B cell (primary cell): ENCODE measurements at regions of chr16 and their contacts with region 1.

Region 1: DNA sequence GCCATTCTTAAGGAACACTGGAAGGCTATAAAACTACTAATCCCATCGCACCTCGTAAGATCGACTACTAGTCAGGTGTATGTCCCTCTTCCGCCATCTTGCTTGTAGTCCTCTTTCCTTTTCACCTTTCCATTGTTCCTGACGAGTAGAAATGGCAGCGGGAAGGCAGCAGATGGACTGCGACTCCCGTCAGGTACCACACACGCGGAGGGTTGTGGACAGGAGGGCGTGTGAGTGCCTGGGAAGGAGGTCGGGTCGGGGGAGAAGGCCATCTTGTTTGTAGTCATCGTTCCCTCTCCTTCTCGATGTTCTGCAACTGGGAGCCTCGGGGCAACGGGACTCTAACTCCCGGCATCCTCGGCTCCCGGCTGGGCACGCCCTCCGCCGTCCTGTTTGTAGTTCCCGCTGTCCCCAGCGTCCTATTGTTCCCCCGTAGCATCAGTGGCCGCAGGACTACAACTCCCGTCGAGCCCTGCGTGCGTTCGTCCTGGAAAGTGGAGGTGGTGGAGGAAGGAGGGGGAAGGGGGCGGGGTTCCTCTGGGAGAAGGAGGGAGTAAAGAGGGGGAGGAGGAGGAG is 324 bp upstream of the FBXL19 start:
- DNase-seq: peak; percentile 98
- ATAC-seq: peak; percentile 69
- H3K4me3 ChIP-seq: peak overlapping the region; percentile 80 to 100 (median 98)
- H3K4me3 Mint-ChIP-seq: peak overlapping the region; percentile 100
- H3K27ac ChIP-seq: peak overlapping the region; percentile 97 to 99
- H3K27ac Mint-ChIP-seq: peak overlapping the region; percentile 100
- H3K4me1 ChIP-seq: peaks cover 0 to 21% of the 10 kb centered on the region in 2 donors
- H3K4me1 Mint-ChIP-seq: peaks cover 19% of the 10 kb centered on the region
- H3K27me3 ChIP-seq: no peaks in the 10 kb centered on the region
- H3K27me3 Mint-ChIP-seq: no peaks in the 10 kb centered on the region
- CTCF ChIP-seq: no peak

Region 2: GRCh38 chr16:30091474-30092372 is 831.3 kb before region 1 on chr16 and contains the start of gene TBX6:
- CTCF ChIA-PET with region 1: no interaction called
- POLR2A ChIA-PET with region 1: no interaction called
- intact Hi-C with region 1: loop called (anchors 2 kb)
- DNase-seq: peak; percentile 95
- ATAC-seq: peak; percentile 74
- H3K4me3 ChIP-seq: peak within 1 kb of the TSS; percentile 52 to 77 (median 70)
- H3K4me3 Mint-ChIP-seq: peak within 1 kb of the TSS; percentile 92
- H3K27ac ChIP-seq: peak within 1 kb of the TSS; percentile 87 to 92
- H3K27ac Mint-ChIP-seq: peak within 1 kb of the TSS; percentile 98
- H3K4me1 ChIP-seq: peaks cover 33 to 62% of the 10 kb centered on the region in 2 donors
- H3K4me1 Mint-ChIP-seq: peaks cover 53% of the 10 kb centered on the region
- H3K27me3 ChIP-seq: no peaks in the 10 kb centered on the region
- H3K27me3 Mint-ChIP-seq: no peaks in the 10 kb centered on the region
- CTCF ChIP-seq: peak; percentile 76
- total RNA-seq, gene TBX6: 5.4 and 6.1 TPM in 2 replicates

Region 3: DNA sequence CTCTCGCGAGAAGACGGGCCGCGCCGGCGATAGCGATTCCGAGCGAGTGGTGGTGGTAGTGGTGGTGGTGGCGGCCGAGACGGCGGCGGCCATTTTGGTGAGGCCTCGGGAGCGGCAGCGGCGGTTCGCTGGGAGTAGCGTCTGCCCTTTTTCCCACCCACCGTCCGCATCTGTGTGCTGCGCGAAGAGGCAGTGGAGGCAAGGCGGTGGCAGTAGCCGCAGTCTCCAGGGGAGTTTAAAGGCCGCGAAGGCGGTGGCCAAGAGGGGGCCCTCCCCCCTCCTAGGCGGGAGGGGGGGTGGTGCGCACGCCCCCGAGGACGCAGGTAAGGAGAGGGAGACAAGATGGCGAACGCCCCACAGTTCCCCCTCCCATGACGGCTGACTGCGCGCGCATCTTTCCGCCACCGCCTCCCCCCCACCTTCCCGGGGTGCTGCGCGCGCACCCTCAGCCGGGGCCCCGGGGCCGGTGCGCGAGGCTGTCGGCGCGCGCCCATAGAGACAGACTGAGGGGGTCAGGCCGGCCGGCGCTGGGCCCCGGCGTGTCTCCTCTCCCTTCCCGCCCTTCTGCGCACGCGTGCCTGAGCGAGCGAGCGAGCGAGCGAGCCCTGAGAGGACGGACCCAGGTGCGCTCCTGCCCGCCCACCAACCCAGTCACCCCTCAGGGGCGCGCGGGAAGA is 224.8 kb before region 1 on chr16:
- CTCF ChIA-PET with region 1: interaction called, 3 read pairs
- POLR2A ChIA-PET with region 1: no interaction called
- intact Hi-C with region 1: loop called (anchors 1 kb)
- DNase-seq: peak; percentile 99
- ATAC-seq: peak; percentile 75
- H3K4me3 ChIP-seq: peak overlapping the region in 4 of 5 experiments; percentile 95 to 100 (median 97)
- H3K4me3 Mint-ChIP-seq: peak overlapping the region; percentile 95
- H3K27ac ChIP-seq: peak overlapping the region; percentile 100
- H3K27ac Mint-ChIP-seq: peak overlapping the region; percentile 100
- H3K4me1 ChIP-seq: peaks cover 19 to 25% of the 10 kb centered on the region in 2 donors
- H3K4me1 Mint-ChIP-seq: peaks cover 29% of the 10 kb centered on the region
- H3K27me3 ChIP-seq: no peaks in the 10 kb centered on the region
- H3K27me3 Mint-ChIP-seq: no peaks in the 10 kb centered on the region
- CTCF ChIP-seq: no peak

Region 4: GRCh38 chr16:30813821-30814189 is 109.2 kb before region 1 on chr16:
- CTCF ChIA-PET with region 1: interaction called, 3 read pairs
- POLR2A ChIA-PET with region 1: no interaction called
- intact Hi-C with region 1: loop called (anchors 1 kb)
- DNase-seq: no peak
- ATAC-seq: no peak
- H3K4me3 ChIP-seq: peak overlapping the region; percentile 42 to 66 (median 57)
- H3K4me3 Mint-ChIP-seq: peak overlapping the region; percentile 88
- H3K27ac ChIP-seq: peak overlapping the region; percentile 65 to 69
- H3K27ac Mint-ChIP-seq: peak overlapping the region; percentile 85
- H3K4me1 ChIP-seq: peaks cover 9 to 15% of the 10 kb centered on the region in 2 donors
- H3K4me1 Mint-ChIP-seq: peaks cover 16% of the 10 kb centered on the region
- H3K27me3 ChIP-seq: no peaks in the 10 kb centered on the region
- H3K27me3 Mint-ChIP-seq: peaks cover 3% of the 10 kb centered on the region
- CTCF ChIP-seq: no peak

Region 5: DNA sequence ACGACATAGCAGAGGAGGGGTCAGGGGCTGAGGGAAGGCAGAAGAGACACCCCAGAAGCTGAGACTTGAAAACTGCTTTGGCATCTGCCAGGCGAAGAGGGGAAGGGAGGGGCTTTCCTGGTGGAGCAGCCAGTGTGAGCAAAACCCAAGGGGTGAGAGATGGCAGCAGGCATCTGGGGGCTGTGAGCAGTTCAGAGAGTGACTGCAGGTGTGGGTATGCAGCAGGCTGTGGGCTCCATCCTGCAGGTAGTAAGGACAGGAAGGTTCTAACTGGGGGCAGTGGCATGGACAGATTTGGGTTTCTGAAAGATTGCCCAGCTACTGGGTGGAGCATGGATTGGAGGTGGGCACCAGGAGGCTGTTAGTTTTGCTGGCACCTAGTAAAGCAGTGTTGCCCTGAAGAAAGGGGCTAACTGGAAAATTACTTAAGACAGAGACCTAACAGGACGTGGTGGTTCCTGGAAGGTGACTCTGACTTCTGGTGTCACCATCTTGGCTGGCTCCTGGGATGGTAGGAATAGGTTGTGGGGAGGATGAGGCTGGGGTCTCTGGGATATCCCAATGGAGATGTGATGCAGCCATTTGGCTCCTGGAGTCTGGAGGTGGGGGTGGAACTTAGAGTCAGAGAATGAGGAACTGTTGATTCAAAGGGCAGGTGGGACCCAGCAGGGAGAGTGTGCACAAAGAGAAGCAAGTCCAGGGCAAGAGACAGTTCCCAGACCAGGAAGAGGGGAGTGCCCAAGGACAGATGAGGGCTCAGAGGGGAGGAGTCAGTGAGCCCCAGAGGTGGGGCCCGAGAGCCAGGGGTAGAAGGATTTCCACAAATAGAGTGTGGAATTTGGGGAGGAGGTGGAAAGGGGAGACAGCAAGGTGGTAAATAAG is 40.4 kb before region 1 on chr16:
- CTCF ChIA-PET with region 1: no interaction called
- POLR2A ChIA-PET with region 1: no interaction called
- intact Hi-C with region 1: no loop called
- DNase-seq: no peak
- ATAC-seq: no peak
- H3K4me3 ChIP-seq: no peak overlapping the region
- H3K4me3 Mint-ChIP-seq: no peak overlapping the region
- H3K27ac ChIP-seq: no peak overlapping the region
- H3K27ac Mint-ChIP-seq: peak overlapping the region; percentile 55
- H3K4me1 ChIP-seq: peaks cover 8 to 21% of the 10 kb centered on the region in 2 donors
- H3K4me1 Mint-ChIP-seq: peaks cover 27% of the 10 kb centered on the region
- H3K27me3 ChIP-seq: no peaks in the 10 kb centered on the region
- H3K27me3 Mint-ChIP-seq: no peaks in the 10 kb centered on the region
- CTCF ChIP-seq: no peak

Region 6: DNA sequence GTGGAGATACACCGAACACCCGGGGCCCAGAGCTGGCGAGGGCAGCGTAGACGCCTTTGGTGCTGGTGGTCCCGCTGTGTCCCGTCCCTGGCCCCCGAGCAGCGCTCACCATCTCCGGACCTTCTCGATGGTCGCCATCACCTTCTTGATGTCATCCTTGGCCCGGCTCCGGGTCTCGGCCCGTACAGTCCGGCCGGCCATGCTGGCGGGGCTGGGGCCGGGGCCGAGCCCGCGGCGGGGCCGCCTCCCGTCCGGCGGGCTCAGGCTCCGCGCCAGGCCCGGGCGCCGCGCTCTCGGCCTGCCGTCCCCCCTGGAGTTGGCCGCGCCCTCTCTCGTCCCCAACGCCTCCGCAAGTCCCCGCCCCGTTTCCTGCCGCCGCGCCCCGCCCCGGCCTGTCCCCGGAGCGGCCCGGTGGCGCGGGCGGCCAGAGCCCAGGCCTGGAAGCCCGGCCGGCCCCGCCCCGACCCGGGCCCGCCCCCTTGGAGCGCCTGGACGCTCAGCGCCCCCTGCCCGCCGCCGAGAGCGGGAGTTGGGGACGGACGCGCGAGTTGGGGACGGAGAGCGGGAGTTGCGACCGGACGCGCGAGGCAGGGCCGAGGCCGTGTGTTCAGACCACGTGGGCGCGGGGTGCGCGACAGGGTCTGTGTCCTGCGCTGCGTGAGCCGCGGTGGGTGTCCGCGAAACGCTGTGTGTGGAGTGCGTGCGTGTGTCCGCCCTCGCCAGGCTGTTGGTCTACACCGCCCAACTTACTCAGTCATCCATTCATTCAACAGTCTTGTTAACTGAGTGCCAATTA is 29.1 kb before region 1 on chr16 and contains the start of gene BCL7C:
- CTCF ChIA-PET with region 1: interaction called, 3 read pairs
- POLR2A ChIA-PET with region 1: no interaction called
- intact Hi-C with region 1: loop called (anchors 1 kb)
- DNase-seq: peak; percentile 85
- ATAC-seq: peak; percentile 80
- H3K4me3 ChIP-seq: peak within 1 kb of the TSS; percentile 11 to 72 (median 65)
- H3K4me3 Mint-ChIP-seq: peak within 1 kb of the TSS; percentile 91
- H3K27ac ChIP-seq: peak within 1 kb of the TSS; percentile 63 to 79
- H3K27ac Mint-ChIP-seq: peak within 1 kb of the TSS; percentile 93
- H3K4me1 ChIP-seq: peaks cover 32 to 43% of the 10 kb centered on the region in 2 donors
- H3K4me1 Mint-ChIP-seq: peaks cover 48% of the 10 kb centered on the region
- H3K27me3 ChIP-seq: no peaks in the 10 kb centered on the region
- H3K27me3 Mint-ChIP-seq: no peaks in the 10 kb centered on the region
- CTCF ChIP-seq: no peak
- total RNA-seq, gene BCL7C: 30.5 and 31.6 TPM in 2 replicates

Region 7: GRCh38 chr16:30910427-30911029 is 12.5 kb before region 1 on chr16:
- CTCF ChIA-PET with region 1: no interaction called
- POLR2A ChIA-PET with region 1: no interaction called
- intact Hi-C with region 1: no loop called
- DNase-seq: no peak
- ATAC-seq: no peak
- H3K4me3 ChIP-seq: no peak overlapping the region
- H3K4me3 Mint-ChIP-seq: no peak overlapping the region
- H3K27ac ChIP-seq: no peak overlapping the region
- H3K27ac Mint-ChIP-seq: no peak overlapping the region
- H3K4me1 ChIP-seq: no peaks in the 10 kb centered on the region
- H3K4me1 Mint-ChIP-seq: peaks cover 3% of the 10 kb centered on the region
- H3K27me3 ChIP-seq: no peaks in the 10 kb centered on the region
- H3K27me3 Mint-ChIP-seq: no peaks in the 10 kb centered on the region
- CTCF ChIP-seq: no peak

Region 8: GRCh38 chr16:30948667-30949649 is 25.9 kb after region 1 on chr16 and contains the start of gene ORAI3:
- CTCF ChIA-PET with region 1: interaction called, 4 read pairs
- POLR2A ChIA-PET with region 1: no interaction called
- intact Hi-C with region 1: loop called (anchors 2 kb)
- DNase-seq: peak; percentile 85
- ATAC-seq: peak; percentile 76
- H3K4me3 ChIP-seq: peak within 1 kb of the TSS; percentile 60 to 93 (median 77)
- H3K4me3 Mint-ChIP-seq: peak within 1 kb of the TSS; percentile 95
- H3K27ac ChIP-seq: peak within 1 kb of the TSS; percentile 61 to 78
- H3K27ac Mint-ChIP-seq: peak within 1 kb of the TSS; percentile 92
- H3K4me1 ChIP-seq: peaks cover 14 to 36% of the 10 kb centered on the region in 2 donors
- H3K4me1 Mint-ChIP-seq: peaks cover 27% of the 10 kb centered on the region
- H3K27me3 ChIP-seq: no peaks in the 10 kb centered on the region
- H3K27me3 Mint-ChIP-seq: no peaks in the 10 kb centered on the region
- CTCF ChIP-seq: no peak
- total RNA-seq, gene ORAI3: 51.8 and 55.8 TPM in 2 replicates

Region 9: DNA sequence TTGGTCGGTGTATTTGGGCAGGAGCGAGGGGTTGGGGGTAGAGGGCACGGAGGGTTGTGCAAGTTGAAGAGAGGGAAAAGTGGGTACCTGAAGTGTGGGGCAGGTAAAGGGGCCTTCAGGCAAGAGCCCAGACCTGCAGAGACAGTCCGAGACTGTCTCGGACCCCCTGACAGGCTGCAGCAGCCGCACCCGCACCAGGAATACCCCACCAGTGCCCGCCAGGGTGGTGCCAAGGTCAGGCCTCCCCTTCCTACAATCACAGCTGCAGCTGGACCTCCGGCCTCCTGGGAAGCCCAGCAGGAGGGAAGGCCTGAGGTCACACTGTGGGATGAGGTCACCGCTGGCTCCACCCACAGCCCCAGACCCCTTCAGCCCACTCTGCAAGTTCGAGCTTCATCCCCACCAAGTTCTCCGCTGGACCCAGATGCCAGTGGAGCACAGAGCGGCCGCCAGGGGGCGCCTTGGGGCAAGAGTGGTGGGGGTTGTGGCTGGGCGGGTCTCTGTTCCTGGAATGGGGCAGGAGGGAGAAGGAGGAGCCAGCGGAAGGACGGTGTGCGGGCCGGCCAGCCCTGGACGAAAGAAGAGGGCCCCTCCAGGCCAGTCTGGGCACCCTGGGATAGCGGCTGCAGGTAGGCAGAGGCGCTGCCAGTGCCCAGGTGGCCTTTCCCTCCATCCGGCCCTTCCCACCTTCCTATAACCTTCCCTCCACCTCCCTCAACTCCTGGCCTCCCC is 61.8 kb after region 1 on chr16 and contains the start of gene HSD3B7:
- CTCF ChIA-PET with region 1: no interaction called
- POLR2A ChIA-PET with region 1: no interaction called
- intact Hi-C with region 1: no loop called
- DNase-seq: peak; percentile 81
- ATAC-seq: peak; percentile 81
- H3K4me3 ChIP-seq: no peak within 1 kb of the TSS
- H3K4me3 Mint-ChIP-seq: no peak within 1 kb of the TSS
- H3K27ac ChIP-seq: no peak within 1 kb of the TSS
- H3K27ac Mint-ChIP-seq: no peak within 1 kb of the TSS
- H3K4me1 ChIP-seq: peaks cover 3 to 6% of the 10 kb centered on the region in 2 donors
- H3K4me1 Mint-ChIP-seq: no peaks in the 10 kb centered on the region
- H3K27me3 ChIP-seq: no peaks in the 10 kb centered on the region
- H3K27me3 Mint-ChIP-seq: no peaks in the 10 kb centered on the region
- CTCF ChIP-seq: peak; percentile 90
- total RNA-seq, gene HSD3B7: 1.0 and 1.2 TPM in 2 replicates

Region 10: DNA sequence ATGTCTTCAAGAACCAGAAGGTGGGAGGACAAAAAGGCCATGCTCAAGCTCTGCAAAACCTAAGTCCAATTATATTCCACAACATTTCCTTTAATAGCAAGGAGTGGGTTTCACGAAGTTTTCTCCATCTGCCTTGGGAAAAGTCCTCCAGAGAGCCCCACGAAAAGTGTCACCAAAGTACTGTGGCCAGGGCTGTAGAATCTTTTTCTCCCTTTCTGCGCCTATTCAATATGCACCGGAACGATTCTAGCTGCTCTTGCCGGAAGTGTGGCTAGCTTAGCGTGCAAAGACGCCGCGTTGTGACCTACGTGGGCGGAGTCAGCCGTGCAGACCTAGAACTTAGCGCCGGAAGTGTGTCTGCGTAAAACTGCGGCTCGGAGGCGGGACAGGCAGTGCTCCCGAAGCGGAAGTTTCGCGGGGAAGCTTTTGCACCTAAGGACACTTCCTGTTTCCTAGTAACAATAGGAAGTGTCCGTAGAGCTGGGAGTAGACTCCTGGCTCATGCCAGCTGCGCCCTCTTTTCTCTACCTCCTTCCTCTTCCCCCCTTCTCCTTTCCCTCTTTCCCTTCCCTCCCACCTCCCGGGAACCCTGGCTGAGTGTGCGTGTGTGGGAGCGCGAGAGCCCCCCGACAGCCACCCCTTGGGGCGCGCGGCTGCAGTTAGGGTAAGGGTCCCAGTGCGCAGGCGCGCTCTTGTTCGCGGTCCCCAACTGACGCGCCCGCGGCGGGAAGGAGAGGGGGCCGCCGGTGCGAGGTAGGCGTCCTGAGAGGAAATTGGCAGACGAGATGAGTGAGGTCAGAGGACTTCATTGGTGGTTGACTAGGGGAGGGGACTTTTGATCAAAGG is 151.1 kb after region 1 on chr16 and contains the starts of genes ZNF646 and ZNF668:
- CTCF ChIA-PET with region 1: no interaction called
- POLR2A ChIA-PET with region 1: no interaction called
- intact Hi-C with region 1: loop called (anchors 1 kb)
- DNase-seq: peak; percentile 99
- ATAC-seq: peak; percentile 86
- H3K4me3 ChIP-seq: peak within 1 kb of the TSS; percentile 73 to 99 (median 91)
- H3K4me3 Mint-ChIP-seq: peak within 1 kb of the TSS; percentile 95
- H3K27ac ChIP-seq: peak within 1 kb of the TSS; percentile 78 to 89
- H3K27ac Mint-ChIP-seq: peak within 1 kb of the TSS; percentile 96
- H3K4me1 ChIP-seq: peaks cover 20 to 25% of the 10 kb centered on the region in 2 donors
- H3K4me1 Mint-ChIP-seq: peaks cover 36% of the 10 kb centered on the region
- H3K27me3 ChIP-seq: no peaks in the 10 kb centered on the region
- H3K27me3 Mint-ChIP-seq: no peaks in the 10 kb centered on the region
- CTCF ChIP-seq: no peak
- total RNA-seq, gene ZNF646: 45.9 and 51.7 TPM in 2 replicates
- total RNA-seq, gene ZNF668: 11.1 and 12.0 TPM in 2 replicates